GM10248 (cell line): ENCODE measurements at regions of chr7 and their contacts with region 1.

Region 1: DNA sequence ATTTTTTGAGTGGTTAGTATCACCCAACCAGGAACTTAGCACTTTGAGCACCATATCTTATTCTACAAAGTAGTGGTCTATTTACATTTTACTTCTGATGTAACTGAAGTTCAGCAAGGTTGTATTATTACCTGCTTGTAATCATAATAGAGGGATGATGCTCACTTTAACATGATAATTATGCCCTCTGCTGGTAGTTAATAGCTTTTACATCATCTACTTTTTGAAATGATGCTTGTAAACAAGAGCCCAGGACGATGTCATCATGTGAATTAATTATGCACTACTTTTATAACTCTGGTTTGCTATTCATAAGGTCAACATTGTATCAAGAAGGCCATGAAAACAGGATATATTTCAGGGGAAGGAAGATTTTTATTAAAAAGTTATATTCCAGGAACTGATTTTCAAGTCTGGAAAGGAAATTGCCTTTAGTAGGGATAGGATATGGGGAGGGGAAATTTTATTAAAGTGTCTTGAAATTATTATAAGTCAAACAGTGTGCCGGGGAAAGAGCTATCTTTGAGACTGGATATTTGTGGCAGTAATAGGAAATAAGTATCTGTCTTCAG is 80.3 kb upstream of the SCIN start:
- DNase-seq: no peak
- CTCF ChIP-seq: peak; percentile 46

Region 2: DNA sequence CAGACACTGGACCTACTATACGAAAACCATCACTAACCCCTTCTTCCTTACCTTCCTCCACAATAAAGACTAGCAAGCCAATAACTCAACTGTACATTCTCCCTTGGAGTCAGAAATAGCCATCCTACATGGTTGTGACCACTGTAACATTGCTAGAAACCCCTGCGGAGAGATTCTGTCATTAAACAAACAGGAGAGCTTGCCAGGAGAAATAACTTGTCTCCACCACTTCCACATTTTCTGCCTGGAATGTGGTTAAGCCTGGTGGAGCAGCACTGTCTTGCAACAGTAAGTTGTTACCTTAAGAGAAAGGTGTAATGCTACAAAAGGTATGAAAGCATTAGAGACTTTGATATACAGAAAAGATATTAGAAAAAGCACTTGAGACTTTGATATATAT is 704.0 kb before region 1 on chr7:
- CTCF ChIA-PET with region 1: no interaction called
- POLR2A ChIA-PET with region 1: no interaction called
- DNase-seq: no peak
- CTCF ChIP-seq: no peak

Region 3: GRCh38 chr7:12389089-12389700 is 101.0 kb before region 1 on chr7:
- CTCF ChIA-PET with region 1: interaction called, 10 read pairs
- POLR2A ChIA-PET with region 1: no interaction called
- DNase-seq: peak; percentile 37
- CTCF ChIP-seq: peak; percentile 73

Region 4: GRCh38 chr7:12436896-12437535 is 53.2 kb before region 1 on chr7:
- CTCF ChIA-PET with region 1: interaction called, 12 read pairs
- POLR2A ChIA-PET with region 1: no interaction called
- DNase-seq: no peak
- CTCF ChIP-seq: no peak

Region 5: GRCh38 chr7:12475362-12476063 is 14.7 kb before region 1 on chr7:
- CTCF ChIA-PET with region 1: interaction called, 12 read pairs
- POLR2A ChIA-PET with region 1: no interaction called
- DNase-seq: no peak
- CTCF ChIP-seq: no peak